ENCODE measurements at regions of chr6 and their contacts with region 1.

Region 1: GRCh38 chr6:17086469-17086868 is 15.4 kb upstream of the STMND1 start:
- DNase-seq: peak; percentile 83
- ATAC-seq: peak; percentile 86
- H3K4me3 ChIP-seq: no peak overlapping the region
- H3K27ac ChIP-seq: no peak overlapping the region
- H3K4me1 ChIP-seq: 0 out of 2 replicates have a peak, but pooled peaks cover 1% of the 10 kb centered on the region
- H3K27me3 ChIP-seq: no peaks in the 10 kb centered on the region; the same call in 1 of the 2 replicates
- CTCF ChIP-seq: peak; percentile 82
- POLR2A ChIP-seq: no peak
- RAD21 ChIP-seq: peak; percentile 90

Region 2: GRCh38 chr6:16514249-16514648 is 572.2 kb before region 1 on chr6:
- CTCF ChIA-PET with region 1: interaction called, 13 read pairs
- POLR2A ChIA-PET with region 1: no interaction called
- dilution Hi-C with region 1: no loop called
- in situ Hi-C with region 1: loop called (anchors 10 kb)
- intact Hi-C with region 1: loop called (anchors 2 kb)
- DNase-seq: peak; percentile 76
- ATAC-seq: peak; percentile 76
- H3K4me3 ChIP-seq: no peak overlapping the region
- H3K27ac ChIP-seq: no peak overlapping the region
- H3K4me1 ChIP-seq: peaks cover 5% of the 10 kb centered on the region; the same call in 1 of the 2 replicates
- H3K27me3 ChIP-seq: no peaks in the 10 kb centered on the region
- CTCF ChIP-seq: peak; percentile 66
- POLR2A ChIP-seq: no peak
- RAD21 ChIP-seq: peak; percentile 77

Region 3: DNA sequence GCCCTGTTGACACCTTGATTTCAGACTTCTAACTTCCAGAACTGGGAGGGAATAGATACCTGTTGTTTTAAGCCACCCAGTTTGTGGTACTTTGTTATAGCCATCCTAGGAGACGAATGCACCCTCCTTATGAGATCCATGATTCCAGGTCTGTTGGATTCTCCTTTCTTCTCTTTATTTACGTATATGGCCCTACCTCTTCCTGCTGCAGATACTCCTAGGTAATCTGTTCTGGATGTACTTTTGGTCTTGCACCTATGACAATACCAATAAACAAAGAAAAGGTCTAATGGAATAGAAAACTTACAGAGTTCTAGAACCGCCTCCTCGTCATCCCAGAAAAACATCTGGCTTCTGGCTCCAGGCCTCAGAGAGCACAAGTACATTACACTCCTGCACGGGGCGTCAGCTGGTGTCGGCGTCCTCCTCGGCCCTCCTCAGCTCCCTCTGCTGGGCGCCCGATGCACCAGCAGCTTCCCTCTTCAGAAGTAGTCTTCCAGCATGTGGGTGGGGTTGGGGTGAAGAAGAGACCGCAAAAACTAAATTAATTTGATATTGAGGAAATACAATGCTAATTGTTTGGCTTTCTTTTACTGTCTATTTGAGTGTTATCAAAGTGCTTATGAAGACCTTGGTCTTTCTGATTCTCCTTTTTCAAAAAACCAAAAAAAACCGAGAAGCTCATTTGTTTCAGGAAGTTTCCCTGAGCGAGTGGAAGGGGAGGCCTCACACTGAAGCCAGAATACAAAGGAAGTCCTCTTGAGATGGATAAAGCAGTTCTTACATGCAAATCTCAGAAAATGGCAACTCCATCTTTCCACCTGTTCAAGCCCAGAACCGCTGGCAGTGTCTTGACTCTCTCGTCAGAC is 315.5 kb before region 1 on chr6:
- CTCF ChIA-PET with region 1: interaction called, 4 read pairs
- POLR2A ChIA-PET with region 1: no interaction called
- dilution Hi-C with region 1: no loop called
- in situ Hi-C with region 1: loop called (anchors 5 kb)
- intact Hi-C with region 1: no loop called
- DNase-seq: peak; percentile 60
- ATAC-seq: no peak
- H3K4me3 ChIP-seq: no peak overlapping the region
- H3K27ac ChIP-seq: peak overlapping the region; percentile 95
- H3K4me1 ChIP-seq: peaks cover 24% of the 10 kb centered on the region
- H3K27me3 ChIP-seq: no peaks in the 10 kb centered on the region
- CTCF ChIP-seq: peak; percentile 66
- POLR2A ChIP-seq: no peak
- RAD21 ChIP-seq: peak; percentile 55

Region 4: GRCh38 chr6:16982807-16983206 is 103.7 kb before region 1 on chr6:
- CTCF ChIA-PET with region 1: no interaction called
- POLR2A ChIA-PET with region 1: no interaction called
- dilution Hi-C with region 1: no loop called
- in situ Hi-C with region 1: loop called (anchors 5 kb)
- intact Hi-C with region 1: no loop called
- DNase-seq: peak; percentile 99
- ATAC-seq: peak; percentile 64
- H3K4me3 ChIP-seq: no peak overlapping the region
- H3K27ac ChIP-seq: no peak overlapping the region
- H3K4me1 ChIP-seq: peaks cover 7% of the 10 kb centered on the region
- H3K27me3 ChIP-seq: peaks cover 5% of the 10 kb centered on the region; the same call in 1 of the 2 replicates
- CTCF ChIP-seq: no peak
- POLR2A ChIP-seq: no peak
- RAD21 ChIP-seq: no peak

Measured in IMR-90 (cell line).